Breast epithelium (tissue), 4 donors: ENCODE measurements at regions of chr5 and their contacts with region 1.

Region 1: GRCh38 chr5:85893996-85894395 is 723.7 kb upstream of the COX7C start:
- DNase-seq: no peak
- H3K4me3 ChIP-seq: no peak overlapping the region
- H3K27ac ChIP-seq: no peak overlapping the region
- H3K4me1 ChIP-seq: no peaks in the 10 kb centered on the region
- H3K27me3 ChIP-seq: no peaks in the 10 kb centered on the region
- CTCF ChIP-seq: no peak
- POLR2A ChIP-seq: no peak

Region 2: DNA sequence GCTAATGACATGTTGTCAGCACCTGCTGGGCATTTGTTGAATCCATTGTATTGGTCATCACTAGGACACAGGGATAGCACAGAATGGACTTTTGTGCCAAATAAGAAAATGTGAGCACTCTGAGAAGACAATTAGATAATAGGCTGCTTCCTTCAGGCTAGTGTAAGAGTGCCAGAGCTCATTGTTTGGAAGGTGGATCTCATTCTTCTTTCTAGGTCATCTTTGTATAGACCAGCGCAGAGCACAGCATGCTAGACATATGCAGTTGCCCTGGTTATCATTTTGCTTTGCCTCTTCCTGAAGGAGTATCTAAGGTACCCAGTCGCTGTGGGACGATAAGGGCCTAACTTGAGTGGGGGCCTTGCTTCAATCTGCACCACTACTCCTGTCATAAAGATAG is 230.4 kb after region 1 on chr5:
- intact Hi-C with region 1: no loop called
- DNase-seq: no peak
- H3K4me3 ChIP-seq: no peak overlapping the region
- H3K27ac ChIP-seq: no peak overlapping the region
- H3K4me1 ChIP-seq: no peaks in the 10 kb centered on the region
- H3K27me3 ChIP-seq: no peaks in the 10 kb centered on the region
- CTCF ChIP-seq: no peak
- POLR2A ChIP-seq: no peak

Region 3: DNA sequence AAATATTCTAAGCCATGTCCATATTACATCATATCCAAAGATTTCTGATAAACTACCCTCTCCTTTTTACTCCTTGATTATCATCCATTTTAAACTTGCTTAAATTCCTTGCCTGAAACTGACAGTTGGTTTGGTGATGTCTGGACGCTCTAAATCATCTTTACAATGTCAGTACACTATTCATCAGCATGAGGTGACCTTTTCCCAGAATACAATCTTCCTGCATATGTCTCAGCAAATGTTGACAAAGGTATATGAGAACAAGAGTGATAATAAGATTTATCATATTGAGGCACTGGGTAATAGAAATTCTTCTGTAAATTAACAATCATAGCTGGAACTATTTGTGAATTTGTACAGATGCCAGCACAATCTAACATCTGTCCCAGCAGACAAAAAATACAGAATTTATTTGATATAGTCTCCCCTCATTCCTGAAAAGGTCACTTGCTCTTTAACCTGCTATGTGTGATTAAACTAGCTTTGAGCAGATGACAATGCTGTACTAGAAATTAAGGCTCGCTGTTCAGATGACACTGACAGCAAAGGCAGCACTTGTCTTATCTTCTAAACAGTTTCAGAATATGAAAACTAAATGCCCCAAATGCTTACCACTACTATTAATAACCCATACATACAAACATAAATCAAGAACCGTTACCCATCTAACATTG is 756.0 kb after region 1 on chr5:
- intact Hi-C with region 1: loop called (anchors 5 kb)
- DNase-seq: no peak
- H3K4me3 ChIP-seq: no peak overlapping the region
- H3K27ac ChIP-seq: no peak overlapping the region
- H3K4me1 ChIP-seq: no peaks in the 10 kb centered on the region
- H3K27me3 ChIP-seq: no peaks in the 10 kb centered on the region
- CTCF ChIP-seq: no peak
- POLR2A ChIP-seq: no peak